IMR-90 (cell line): ENCODE measurements at regions of chr2 and their contacts with region 1.

Region 1: DNA sequence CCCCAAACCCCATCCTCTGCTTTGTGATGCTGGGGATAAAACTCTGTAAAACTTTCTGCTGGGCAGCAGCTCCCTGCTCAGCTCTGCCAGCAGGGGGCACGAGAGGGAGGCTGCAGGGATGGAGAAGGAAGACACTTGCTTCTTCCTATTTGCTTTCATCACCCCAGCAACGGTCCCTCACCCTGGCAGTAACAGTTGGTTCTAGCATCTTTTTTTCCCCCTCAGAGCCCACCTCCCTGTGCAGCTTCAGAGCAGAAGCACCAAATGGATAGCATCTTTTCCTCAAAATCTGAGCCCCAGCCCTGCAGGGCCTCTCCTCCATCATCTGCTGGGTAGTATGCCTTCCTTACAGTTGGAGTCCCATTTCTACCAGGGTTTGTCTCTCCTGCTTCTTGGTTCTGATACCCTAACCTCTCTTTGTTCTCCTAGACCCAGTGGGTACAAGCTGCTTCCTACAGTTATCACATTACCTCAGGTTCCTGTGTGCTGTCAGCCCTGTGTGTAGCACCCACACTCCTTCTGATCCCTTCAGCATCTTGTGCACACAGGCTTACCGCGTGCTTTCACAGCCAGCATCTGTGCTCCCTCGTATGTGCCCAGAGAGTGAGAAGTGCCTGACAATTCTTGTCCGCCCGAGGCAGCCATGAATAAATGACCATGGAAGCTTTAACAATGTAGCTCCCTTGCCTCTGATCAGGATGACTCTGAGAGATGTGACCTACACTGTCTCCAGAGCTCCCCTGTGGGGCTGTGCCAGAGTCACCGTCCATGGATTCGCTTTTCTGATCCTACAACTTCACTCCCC is 14.5 kb downstream of the CKAP2L start:
- DNase-seq: peak; percentile 77
- ATAC-seq: peak; percentile 95
- H3K4me3 ChIP-seq: no peak overlapping the region
- H3K27ac ChIP-seq: no peak overlapping the region
- H3K4me1 ChIP-seq: peaks cover 9% of the 10 kb centered on the region
- H3K27me3 ChIP-seq: no peaks in the 10 kb centered on the region
- CTCF ChIP-seq: peak; percentile 95
- POLR2A ChIP-seq: no peak
- RAD21 ChIP-seq: peak; percentile 94

Region 2: DNA sequence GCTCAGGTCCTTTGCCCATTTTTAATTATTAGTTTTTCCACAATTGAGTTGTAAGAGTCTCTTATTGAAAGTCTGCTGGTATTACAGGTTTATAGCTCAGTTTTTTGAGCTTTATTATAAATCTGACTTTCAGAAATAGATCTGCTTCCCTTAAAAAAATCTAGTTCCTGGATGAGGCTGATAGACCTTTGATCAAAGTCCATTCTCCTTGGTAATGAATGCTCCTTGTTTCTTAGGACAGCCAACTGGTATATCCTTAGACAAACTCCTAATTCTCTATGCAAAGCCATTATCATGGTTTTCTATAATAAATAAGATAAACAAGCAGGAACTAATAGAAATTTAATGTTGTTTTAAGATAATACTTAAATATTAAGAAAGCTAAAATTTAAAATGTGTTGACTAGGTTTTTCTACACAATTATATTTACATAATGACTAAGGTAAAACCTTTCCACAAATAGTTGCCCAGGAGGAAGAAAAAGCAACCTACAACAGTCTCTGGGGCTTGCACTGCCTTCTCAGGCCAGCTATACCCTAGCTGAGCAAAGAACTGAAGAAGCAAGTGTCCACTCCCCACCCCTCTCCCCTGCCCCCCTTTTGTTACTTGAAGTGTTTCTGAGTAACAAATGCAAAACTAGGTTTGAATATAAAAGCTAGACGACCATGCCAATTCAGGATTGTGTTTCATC is 12.3 kb before region 1 on chr2:
- CTCF ChIA-PET with region 1: interaction called, 24 read pairs
- POLR2A ChIA-PET with region 1: no interaction called
- dilution Hi-C with region 1: no loop called
- in situ Hi-C with region 1: no loop called
- intact Hi-C with region 1: no loop called
- DNase-seq: no peak
- ATAC-seq: no peak
- H3K4me3 ChIP-seq: no peak overlapping the region
- H3K27ac ChIP-seq: no peak overlapping the region
- H3K4me1 ChIP-seq: peaks cover 1% of the 10 kb centered on the region; the same call in 1 of the 2 replicates
- H3K27me3 ChIP-seq: no peaks in the 10 kb centered on the region
- CTCF ChIP-seq: no peak
- POLR2A ChIP-seq: no peak
- RAD21 ChIP-seq: no peak

Region 3: GRCh38 chr2:112877423-112877822 is 127.5 kb after region 1 on chr2:
- CTCF ChIA-PET with region 1: interaction called, 6 read pairs
- POLR2A ChIA-PET with region 1: no interaction called
- dilution Hi-C with region 1: no loop called
- in situ Hi-C with region 1: loop called (anchors 10 kb)
- intact Hi-C with region 1: no loop called
- DNase-seq: peak; percentile 41
- ATAC-seq: no peak
- H3K4me3 ChIP-seq: no peak overlapping the region
- H3K27ac ChIP-seq: no peak overlapping the region; the same call in 1 of the 2 replicates
- H3K4me1 ChIP-seq: peaks cover 14% of the 10 kb centered on the region
- H3K27me3 ChIP-seq: no peaks in the 10 kb centered on the region
- CTCF ChIP-seq: no peak
- POLR2A ChIP-seq: no peak
- RAD21 ChIP-seq: no peak

Region 4: DNA sequence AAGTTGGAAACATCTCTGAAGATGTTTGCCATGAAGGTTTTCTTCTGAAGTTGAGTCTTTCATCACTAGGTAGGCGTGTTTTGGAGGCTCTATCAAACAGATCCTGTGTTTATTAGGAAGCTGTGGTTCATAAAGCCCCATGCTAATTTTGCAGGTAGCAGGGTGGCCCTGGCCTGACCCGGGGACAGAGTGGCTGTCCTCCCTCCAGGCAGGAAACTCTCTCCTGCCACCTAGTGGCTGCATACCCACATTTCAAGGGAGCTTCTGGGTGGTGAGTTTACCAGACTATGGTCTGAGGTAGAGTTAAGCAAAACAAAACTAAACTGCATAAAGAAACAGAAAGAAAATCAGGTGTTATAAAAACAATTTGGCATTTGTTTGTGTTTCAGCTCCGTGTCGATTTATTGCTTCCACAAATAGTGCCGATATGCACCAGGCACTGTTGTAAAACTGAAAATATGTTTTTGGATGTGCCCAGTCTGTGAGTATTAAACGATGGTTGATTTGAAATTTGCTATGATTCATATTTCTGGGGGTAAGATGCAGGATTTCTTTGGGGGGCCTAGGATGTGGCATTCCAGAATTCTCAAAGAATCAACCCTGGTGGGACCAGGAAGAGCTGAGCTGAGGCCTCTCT is 135.0 kb after region 1 on chr2:
- CTCF ChIA-PET with region 1: interaction called, 12 read pairs
- POLR2A ChIA-PET with region 1: no interaction called
- dilution Hi-C with region 1: no loop called
- in situ Hi-C with region 1: no loop called
- intact Hi-C with region 1: loop called (anchors 2 kb)
- DNase-seq: no peak
- ATAC-seq: peak; percentile 28; the same call in 1 of the 2 replicates
- H3K4me3 ChIP-seq: no peak overlapping the region
- H3K27ac ChIP-seq: no peak overlapping the region
- H3K4me1 ChIP-seq: peaks cover 9% of the 10 kb centered on the region
- H3K27me3 ChIP-seq: no peaks in the 10 kb centered on the region
- CTCF ChIP-seq: peak; percentile 63
- POLR2A ChIP-seq: no peak
- RAD21 ChIP-seq: peak; percentile 66

Region 5: GRCh38 chr2:112941753-112942658 is 192.0 kb after region 1 on chr2:
- CTCF ChIA-PET with region 1: interaction called, 90 read pairs
- POLR2A ChIA-PET with region 1: no interaction called
- dilution Hi-C with region 1: no loop called
- in situ Hi-C with region 1: loop called (anchors 5 kb)
- intact Hi-C with region 1: loop called (anchors 1 kb)
- DNase-seq: peak; percentile 76
- ATAC-seq: peak; percentile 95
- H3K4me3 ChIP-seq: no peak overlapping the region
- H3K27ac ChIP-seq: no peak overlapping the region
- H3K4me1 ChIP-seq: no peaks in the 10 kb centered on the region
- H3K27me3 ChIP-seq: peaks cover 13% of the 10 kb centered on the region
- CTCF ChIP-seq: peak; percentile 90
- POLR2A ChIP-seq: no peak
- RAD21 ChIP-seq: peak; percentile 92

Region 6: DNA sequence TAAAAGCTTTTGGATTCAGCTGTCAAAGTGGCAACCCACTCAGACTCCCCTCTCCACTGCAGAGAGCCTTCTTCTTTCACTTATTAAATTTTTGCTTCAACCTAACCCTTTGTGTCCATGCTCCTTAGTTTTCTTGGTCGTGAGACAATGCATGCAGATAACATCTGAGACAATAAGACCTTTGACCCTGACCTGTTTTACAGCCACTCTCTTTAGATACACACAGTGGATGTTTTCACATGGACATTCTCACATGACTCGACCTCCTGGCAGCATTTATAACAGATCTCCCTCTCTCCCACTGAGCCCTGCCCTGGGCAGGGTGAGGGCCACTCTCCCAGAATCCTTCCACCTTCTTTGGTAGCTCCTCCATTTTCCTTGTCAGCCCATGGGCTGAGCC is 197.4 kb after region 1 on chr2:
- CTCF ChIA-PET with region 1: interaction called, 90 read pairs
- POLR2A ChIA-PET with region 1: no interaction called
- dilution Hi-C with region 1: no loop called
- in situ Hi-C with region 1: loop called (anchors 5 kb)
- intact Hi-C with region 1: no loop called
- DNase-seq: no peak
- ATAC-seq: no peak
- H3K4me3 ChIP-seq: no peak overlapping the region
- H3K27ac ChIP-seq: no peak overlapping the region
- H3K4me1 ChIP-seq: no peaks in the 10 kb centered on the region
- H3K27me3 ChIP-seq: peaks cover 23% of the 10 kb centered on the region
- CTCF ChIP-seq: no peak
- POLR2A ChIP-seq: no peak
- RAD21 ChIP-seq: no peak

Region 7: DNA sequence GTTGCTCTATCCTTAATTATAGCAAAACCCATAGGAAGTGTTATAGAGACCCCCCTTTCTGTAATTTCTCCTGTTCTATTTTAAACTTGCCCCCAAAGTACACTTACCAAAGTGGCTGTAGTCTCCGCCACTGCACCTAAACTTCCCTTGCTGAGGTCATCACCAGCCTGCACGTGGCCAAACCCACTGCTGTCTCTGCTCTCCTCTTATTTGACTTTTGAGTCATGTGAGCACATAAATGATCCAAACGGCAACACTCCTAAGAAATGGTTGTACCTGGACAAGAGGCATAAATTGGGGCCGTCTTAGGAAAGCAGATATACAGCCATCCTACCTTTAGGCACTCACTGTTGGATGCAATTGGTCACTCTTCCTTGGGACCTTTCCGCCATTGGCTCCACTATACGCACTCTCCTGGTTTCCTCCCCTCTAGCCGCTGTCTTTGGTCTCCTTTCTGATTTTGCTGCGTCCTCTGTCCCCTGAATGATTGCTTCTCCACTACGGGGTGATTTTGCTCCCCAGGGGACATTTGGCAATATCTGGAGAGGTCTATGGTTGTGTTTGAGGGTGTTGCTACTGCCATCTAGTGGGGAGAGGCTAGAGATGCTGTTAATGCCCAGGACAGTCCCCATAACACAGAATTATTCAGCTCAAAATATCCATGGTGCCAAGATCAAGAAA is 208.6 kb after region 1 on chr2:
- CTCF ChIA-PET with region 1: interaction called, 6 read pairs
- POLR2A ChIA-PET with region 1: no interaction called
- dilution Hi-C with region 1: no loop called
- in situ Hi-C with region 1: no loop called
- intact Hi-C with region 1: loop called (anchors 1 kb)
- DNase-seq: peak; percentile 57
- ATAC-seq: peak; percentile 97
- H3K4me3 ChIP-seq: no peak overlapping the region
- H3K27ac ChIP-seq: no peak overlapping the region
- H3K4me1 ChIP-seq: no peaks in the 10 kb centered on the region
- H3K27me3 ChIP-seq: peaks cover 35% of the 10 kb centered on the region
- CTCF ChIP-seq: peak; percentile 72
- POLR2A ChIP-seq: no peak
- RAD21 ChIP-seq: peak; percentile 64